Heart left ventricle (tissue), 16 donors: ENCODE measurements at regions of chr14 and their contacts with region 1.

Region 1: DNA sequence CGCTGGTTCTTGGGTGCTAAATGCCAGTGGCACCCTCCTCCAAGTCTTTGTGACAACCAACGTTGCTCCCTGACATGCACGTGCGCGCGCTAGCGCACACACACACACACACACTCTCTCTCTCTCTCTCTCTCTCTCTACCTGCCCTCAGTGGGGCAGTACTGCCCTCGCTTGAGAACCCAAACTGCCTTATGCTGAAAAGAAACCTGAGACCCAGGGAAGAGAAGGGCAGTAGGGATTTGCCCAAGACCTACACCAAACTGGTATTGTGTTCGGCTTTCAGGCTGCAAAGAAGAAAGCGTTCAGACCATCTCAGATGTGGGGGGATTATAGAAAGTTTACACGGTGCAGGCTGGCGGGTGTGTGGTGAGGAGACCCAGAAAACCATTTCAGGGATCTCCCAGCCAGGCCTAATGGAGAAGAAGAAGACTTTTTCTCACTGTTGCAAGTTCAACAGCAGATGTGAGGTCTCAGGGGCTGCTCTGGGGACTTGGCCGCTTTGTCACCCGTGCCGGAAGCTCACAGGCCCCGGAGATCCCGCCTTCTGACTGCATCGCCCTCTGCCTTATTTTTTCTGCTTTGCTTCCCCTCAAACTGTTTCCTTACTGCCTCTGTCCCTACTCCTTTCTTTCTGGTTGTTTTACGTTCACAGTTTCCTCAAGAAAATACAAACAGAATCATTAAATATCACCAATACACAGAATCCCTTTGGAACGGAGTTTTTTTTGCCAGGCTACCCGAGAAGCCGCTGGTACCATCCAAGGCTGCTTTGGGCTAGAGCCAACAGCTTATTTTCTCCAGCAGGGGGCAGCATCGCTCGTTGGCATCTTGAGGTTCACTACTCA is 82.4 kb downstream of the PPM1A start:
- DNase-seq: peak; percentile 37 to 65 (median 50)
- ATAC-seq: peak; percentile 35 to 77 (median 72)
- H3K4me3 ChIP-seq: peak overlapping the region in 11 of 12 donors; percentile 7 to 62 (median 48)
- H3K27ac ChIP-seq: peak overlapping the region in 4 of 12 donors; percentile 6 to 45 (median 24)
- H3K4me1 ChIP-seq: peaks cover 0 to 24% (median 7%) of the 10 kb centered on the region in 12 donors
- H3K27me3 ChIP-seq: peaks cover 0 to 21% (median 6%) of the 10 kb centered on the region in 9 donors
- CTCF ChIP-seq: peak; percentile 55 to 79 (median 72)
- POLR2A ChIP-seq: no peak

Region 2: DNA sequence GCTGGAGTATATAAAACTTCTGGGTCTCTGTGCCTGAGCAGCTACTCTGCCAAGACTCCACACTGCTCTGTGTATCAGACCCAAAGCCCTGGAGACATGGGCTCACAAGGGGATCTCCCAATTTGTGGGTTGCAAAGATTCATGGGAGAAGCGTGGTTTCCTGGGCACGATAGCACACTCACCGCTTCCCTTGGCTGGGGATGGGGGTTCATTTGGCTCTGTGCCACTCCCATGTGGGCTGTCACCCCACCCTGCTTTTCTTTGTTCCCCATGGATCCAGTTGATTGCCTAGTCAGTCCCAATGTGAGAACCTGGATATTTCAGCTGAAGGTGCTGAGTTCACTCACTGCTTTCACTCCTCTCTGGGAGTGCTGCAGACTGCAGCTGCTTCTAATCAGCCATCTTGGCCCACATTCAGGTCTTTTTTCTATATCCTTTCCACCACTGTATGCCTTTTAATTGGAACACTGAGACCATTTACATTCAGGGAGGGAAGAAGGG is 279.7 kb before region 1 on chr14:
- intact Hi-C with region 1: no loop called
- DNase-seq: peak in 1 of 5 donors; percentile 27
- ATAC-seq: no peak
- H3K4me3 ChIP-seq: no peak overlapping the region
- H3K27ac ChIP-seq: no peak overlapping the region
- H3K4me1 ChIP-seq: peaks cover 0 to 8% (median 0%) of the 10 kb centered on the region in 12 donors
- H3K27me3 ChIP-seq: no peaks in the 10 kb centered on the region
- CTCF ChIP-seq: no peak
- POLR2A ChIP-seq: no peak

Region 3: GRCh38 chr14:60195179-60195810 is 136.1 kb before region 1 on chr14:
- intact Hi-C with region 1: loop called in 5 of 10 experiments (anchors 5 to 10 kb)
- DNase-seq: no peak
- ATAC-seq: peak in 3 of 4 donors; percentile 59 to 71 (median 67)
- H3K4me3 ChIP-seq: no peak overlapping the region
- H3K27ac ChIP-seq: no peak overlapping the region
- H3K4me1 ChIP-seq: no peaks in the 10 kb centered on the region
- H3K27me3 ChIP-seq: no peaks in the 10 kb centered on the region
- CTCF ChIP-seq: peak in 8 of 12 donors; percentile 16 to 45 (median 31)
- POLR2A ChIP-seq: no peak

Region 4: DNA sequence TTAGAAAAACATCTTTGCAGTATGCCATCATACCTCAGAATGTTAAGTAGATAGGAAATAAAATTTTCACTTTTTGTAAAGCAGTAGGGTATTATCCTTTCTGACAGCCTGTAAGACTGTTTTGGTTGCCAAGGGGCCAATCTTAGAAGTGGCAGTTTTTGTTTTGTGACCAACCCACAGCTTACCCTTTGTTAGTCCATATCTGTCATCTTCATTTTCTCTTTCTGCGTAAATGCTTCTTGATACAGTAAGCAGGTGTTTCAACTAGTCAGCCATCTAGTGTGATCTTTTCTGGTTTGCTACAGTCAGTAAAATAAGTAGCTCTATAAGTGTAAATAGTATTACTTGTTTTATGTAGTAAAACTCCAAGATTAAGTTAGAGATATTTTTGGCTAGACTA is 73.6 kb before region 1 on chr14:
- intact Hi-C with region 1: loop called in 1 of 10 experiments (anchors 2 kb)
- DNase-seq: no peak
- ATAC-seq: no peak
- H3K4me3 ChIP-seq: no peak overlapping the region
- H3K27ac ChIP-seq: no peak overlapping the region
- H3K4me1 ChIP-seq: peaks cover 0 to 78% (median 38%) of the 10 kb centered on the region in 12 donors
- H3K27me3 ChIP-seq: no peaks in the 10 kb centered on the region
- CTCF ChIP-seq: no peak
- POLR2A ChIP-seq: no peak